ENCODE measurements at regions of chr20 and their contacts with region 1.

Region 1: GRCh38 chr20:1392823-1393506 is at the start of gene FKBP1A:
- DNase-seq: peak; percentile 93
- H3K4me3 Mint-ChIP-seq: peak within 1 kb of the TSS; percentile 84
- H3K27ac Mint-ChIP-seq: peak within 1 kb of the TSS; percentile 83
- H3K4me1 Mint-ChIP-seq: peaks cover 59% of the 10 kb centered on the region
- H3K27me3 Mint-ChIP-seq: peaks cover 25% of the 10 kb centered on the region
- total RNA-seq, gene FKBP1A: 205 to 207 TPM

Region 2: GRCh38 chr20:1357921-1358671 is 34.9 kb before region 1 on chr20:
- CTCF ChIA-PET with region 1: interaction called, 12 read pairs
- POLR2A ChIA-PET with region 1: interaction called, 6 read pairs
- DNase-seq: peak; percentile 61
- H3K4me3 Mint-ChIP-seq: peak overlapping the region; percentile 56
- H3K27ac Mint-ChIP-seq: peak overlapping the region; percentile 87
- H3K4me1 Mint-ChIP-seq: peaks cover 53% of the 10 kb centered on the region
- H3K27me3 Mint-ChIP-seq: no peaks in the 10 kb centered on the region

Region 3: DNA sequence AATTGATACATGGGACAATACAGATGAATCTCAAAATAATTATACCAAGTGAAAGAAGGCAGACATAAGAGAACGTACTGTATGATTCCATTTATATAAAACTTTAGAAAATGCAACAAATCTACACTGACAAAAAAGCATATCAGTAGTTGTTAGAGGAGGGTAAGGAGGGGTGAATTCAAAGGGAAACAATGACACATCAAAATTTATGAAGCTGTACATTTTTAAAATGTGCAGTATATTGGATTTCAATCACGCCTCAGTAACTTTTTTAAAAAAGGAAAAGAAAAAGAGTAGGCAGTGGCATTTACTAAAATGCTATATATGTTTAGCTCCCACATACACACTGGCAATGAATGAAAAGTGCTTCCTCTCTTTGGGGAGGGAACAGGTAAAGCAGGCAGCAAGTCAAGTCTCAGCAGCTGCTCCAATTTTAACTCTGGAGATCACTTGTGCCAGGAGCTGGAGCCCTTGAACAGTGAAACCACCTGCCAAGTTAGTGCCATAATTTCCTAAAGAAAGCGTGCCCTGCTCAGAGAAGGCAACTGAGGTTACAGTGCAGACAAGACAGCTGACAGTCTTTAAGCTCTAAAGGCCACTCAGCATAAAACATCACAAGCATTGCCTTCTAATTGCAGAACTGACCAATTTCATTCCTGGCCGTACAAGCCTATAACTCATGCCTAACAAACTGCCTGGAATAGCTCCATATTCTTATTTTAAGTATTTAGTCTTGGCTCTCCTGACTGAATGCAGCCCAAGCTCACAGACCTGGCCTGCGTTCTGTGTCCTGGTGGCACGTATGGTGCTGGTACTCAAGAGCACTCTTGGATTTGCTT is 11.0 kb before region 1 on chr20:
- CTCF ChIA-PET with region 1: interaction called, 5 read pairs
- POLR2A ChIA-PET with region 1: interaction called, 13 read pairs
- DNase-seq: no peak
- H3K4me3 Mint-ChIP-seq: no peak overlapping the region
- H3K27ac Mint-ChIP-seq: no peak overlapping the region
- H3K4me1 Mint-ChIP-seq: peaks cover 83% of the 10 kb centered on the region
- H3K27me3 Mint-ChIP-seq: no peaks in the 10 kb centered on the region

Measured in activated CD4-positive, alpha-beta memory T cell treated with anti-CD3 and anti-CD28 coated beads, Interleukin-2, amount 10 ng/mL, durations not matched to agents 7 days and 5 days (primary cell).